ENCODE measurements at regions of chr12 and their contacts with region 1.

Region 1: DNA sequence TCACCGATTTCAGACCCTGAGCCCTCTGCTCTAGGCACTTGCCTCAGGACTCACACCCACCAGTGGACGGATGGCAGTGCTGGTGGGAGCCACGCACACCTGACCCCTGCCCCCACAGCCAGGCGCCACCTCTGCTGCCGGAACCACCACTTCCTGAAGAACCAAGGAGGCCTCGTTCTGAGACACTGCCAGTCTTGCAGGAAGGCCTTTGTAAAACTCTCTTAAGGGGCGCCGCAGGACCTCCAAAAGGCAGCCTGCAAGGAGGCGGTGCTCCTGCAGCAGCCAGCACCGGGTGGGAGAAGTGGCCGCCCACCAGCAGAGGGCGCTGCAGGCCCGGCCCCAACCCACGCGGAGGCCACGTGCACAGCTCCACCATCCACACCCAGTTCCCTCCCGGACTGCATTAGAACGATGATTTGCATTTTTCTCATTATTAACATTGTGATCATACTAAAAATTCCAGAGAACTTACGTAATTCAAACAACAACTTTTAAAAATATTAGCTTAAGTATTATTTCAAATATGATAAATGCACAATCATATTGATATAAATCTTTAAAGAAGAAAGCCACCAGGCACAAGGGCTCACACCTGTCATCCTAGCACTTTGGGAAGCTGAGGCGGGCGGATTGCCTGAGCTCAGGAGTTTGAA is 12.8 kb downstream of the STX2 start:
- DNase-seq: no peak
- H3K4me3 ChIP-seq: no peak overlapping the region
- H3K27me3 ChIP-seq: no peaks in the 10 kb centered on the region
- CTCF ChIP-seq: peak; percentile 87

Region 2: DNA sequence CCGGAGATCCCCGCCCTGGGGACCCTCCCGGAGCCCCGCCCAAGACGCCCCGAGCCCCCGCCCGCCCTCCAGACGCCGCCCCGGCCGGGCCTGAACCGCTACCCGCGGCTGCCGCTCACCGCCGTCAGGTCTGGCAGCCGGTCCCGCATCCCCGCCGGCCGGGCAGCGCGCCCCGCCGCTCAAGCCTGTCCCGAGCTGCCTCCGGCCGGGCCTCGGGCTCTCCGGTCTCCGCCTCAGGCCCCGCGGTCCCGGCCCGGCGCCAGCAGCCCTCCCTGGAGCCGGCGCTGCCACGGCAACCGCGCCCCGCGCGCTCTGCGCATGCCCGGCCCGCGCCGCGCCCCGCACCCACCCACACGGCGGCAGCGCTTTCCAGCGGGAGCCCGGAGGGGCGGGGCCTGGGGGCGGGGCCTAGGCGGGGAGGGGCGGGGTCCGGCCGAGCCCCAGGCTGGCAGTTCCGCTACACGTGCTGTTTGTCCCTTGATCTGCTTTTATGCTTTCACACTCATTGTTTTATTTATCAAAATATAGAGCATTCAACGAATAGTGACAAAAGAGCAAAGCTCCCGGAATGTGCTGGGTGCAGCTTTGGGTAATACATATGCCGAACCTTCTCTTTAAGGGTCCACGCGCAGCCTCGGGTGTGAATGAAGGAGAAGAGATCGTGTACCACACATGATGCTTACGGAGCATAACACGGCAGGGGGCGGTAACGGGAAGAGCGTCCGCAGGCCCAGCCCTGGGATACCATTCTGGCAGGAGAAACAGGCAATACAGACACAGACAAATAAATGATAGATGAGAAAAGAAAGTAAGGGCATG is 12.9 kb after region 1 on chr12 and contains the start of gene STX2:
- CTCF ChIA-PET with region 1: interaction called, 10 read pairs
- POLR2A ChIA-PET with region 1: no interaction called
- DNase-seq: no peak
- H3K4me3 ChIP-seq: peak within 1 kb of the TSS; percentile 92
- H3K27me3 ChIP-seq: no peaks in the 10 kb centered on the region
- CTCF ChIP-seq: peak; percentile 52
- polyA plus RNA-seq, gene STX2: 26.0 and 43.1 TPM in 2 replicates

Region 3: GRCh38 chr12:130916251-130916911 is 90.1 kb after region 1 on chr12:
- CTCF ChIA-PET with region 1: interaction called, 10 read pairs
- POLR2A ChIA-PET with region 1: no interaction called
- DNase-seq: no peak
- H3K4me3 ChIP-seq: peak overlapping the region; percentile 9
- H3K27me3 ChIP-seq: no peaks in the 10 kb centered on the region
- CTCF ChIP-seq: peak; percentile 99